A549 (cell line): ENCODE measurements at regions of chr7 and their contacts with region 1.

Region 1: DNA sequence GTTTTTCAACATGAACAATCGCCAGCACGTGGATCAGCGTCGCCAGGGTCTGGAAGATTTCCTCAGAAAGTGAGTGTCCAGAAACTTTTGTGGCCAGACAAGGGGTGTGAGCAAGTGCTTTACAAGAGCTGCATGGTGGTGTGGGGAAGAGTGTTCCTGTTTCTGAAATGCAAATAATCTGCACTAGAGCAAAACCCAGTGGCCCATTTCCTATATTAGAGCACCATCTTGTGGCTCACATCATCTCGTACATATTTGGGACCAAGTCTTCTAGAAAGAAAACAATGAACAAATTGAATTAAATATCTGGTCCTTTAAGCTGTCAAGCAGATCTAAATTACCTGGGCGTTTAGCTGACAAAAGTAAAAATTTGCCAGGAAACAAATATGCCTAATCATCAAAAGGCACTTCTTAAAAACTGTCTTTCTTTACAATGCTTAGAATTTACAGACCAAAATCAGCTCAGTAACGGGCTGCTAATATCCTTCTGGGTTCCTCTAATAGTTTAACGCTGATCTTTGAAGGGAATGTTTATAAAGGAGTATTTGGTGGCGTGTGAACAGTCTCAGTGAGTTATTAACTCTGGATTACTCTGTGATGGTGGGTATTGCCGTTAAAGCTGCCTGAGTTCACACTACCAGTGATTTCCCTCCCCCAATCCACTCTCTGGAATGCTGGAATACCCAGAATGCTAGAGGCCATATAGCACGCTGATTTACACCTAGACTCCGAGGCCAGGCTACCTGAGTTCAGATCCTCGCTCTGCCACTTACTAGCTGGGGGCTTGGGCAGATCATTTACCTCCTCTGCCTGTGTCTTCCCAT is 73.6 kb downstream of the SNX10 start:
- DNase-seq: peak; percentile 19 to 74
- ATAC-seq: peak; percentile 76 to 83
- H3K4me3 ChIP-seq: no peak overlapping the region
- H3K27ac ChIP-seq: no peak overlapping the region
- H3K4me1 ChIP-seq: peaks cover 7% of the 10 kb centered on the region; the same call in 1 of the 3 replicates
- CTCF ChIP-seq: peak; percentile 94
- EP300 ChIP-seq: no peak
- POLR2A ChIP-seq: no peak
- RAD21 ChIP-seq: peak; percentile 96 to 98

Region 2: GRCh38 chr7:25894902-25895791 is 470.1 kb before region 1 on chr7:
- CTCF ChIA-PET with region 1: interaction called, 154 read pairs
- POLR2A ChIA-PET with region 1: no interaction called
- DNase-seq: peak; percentile 42 to 75
- ATAC-seq: peak; percentile 88 to 94
- H3K4me3 ChIP-seq: peak overlapping the region; percentile 22
- H3K27ac ChIP-seq: peak overlapping the region in 1 of 2 experiments; percentile 4; a peak in 3 of 6 replicates
- H3K4me1 ChIP-seq: peaks cover 6% of the 10 kb centered on the region; the same call in 1 of the 3 replicates
- CTCF ChIP-seq: peak; percentile 61
- EP300 ChIP-seq: no peak
- POLR2A ChIP-seq: no peak
- RAD21 ChIP-seq: peak in 1 of 2 experiments; percentile 24; a peak in 2 of 5 replicates

Region 3: DNA sequence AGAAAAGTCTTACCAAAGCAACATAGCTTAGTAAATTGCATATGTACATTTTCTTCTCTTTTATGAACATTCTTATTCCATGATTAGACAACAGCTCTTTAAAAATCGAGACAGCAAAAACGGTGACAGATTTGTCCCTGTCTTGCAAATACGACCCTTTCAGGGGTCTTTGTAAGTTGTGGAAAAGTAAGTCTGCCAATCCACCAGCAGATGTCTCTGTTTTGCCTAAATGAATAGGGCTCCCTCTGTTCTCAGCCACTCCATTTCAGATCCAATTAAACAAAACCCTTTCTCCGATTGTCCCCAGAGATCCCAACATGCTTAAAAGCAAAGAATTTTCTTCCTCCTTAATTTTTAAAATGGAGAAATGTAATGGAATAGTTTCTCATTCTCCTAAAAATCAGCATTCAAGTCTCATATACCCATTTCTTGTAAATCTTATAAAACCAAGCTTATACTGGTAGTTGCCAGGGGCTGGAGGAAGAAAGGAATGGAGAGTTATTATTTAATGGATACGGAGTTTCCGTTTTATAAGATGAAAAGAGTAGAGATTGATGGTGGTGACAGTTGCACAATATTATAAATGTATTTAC is 274.3 kb before region 1 on chr7:
- CTCF ChIA-PET with region 1: interaction called, 94 read pairs
- POLR2A ChIA-PET with region 1: no interaction called
- DNase-seq: peak; percentile 45 to 64
- ATAC-seq: peak; percentile 68 to 87; a peak in 5 of 6 replicates
- H3K4me3 ChIP-seq: no peak overlapping the region
- H3K27ac ChIP-seq: no peak overlapping the region
- H3K4me1 ChIP-seq: no peaks in the 10 kb centered on the region
- CTCF ChIP-seq: peak; percentile 87
- EP300 ChIP-seq: no peak
- POLR2A ChIP-seq: no peak
- RAD21 ChIP-seq: peak; percentile 78 to 80

Region 4: GRCh38 chr7:26284995-26285632 is 80.2 kb before region 1 on chr7:
- CTCF ChIA-PET with region 1: interaction called, 41 read pairs
- POLR2A ChIA-PET with region 1: no interaction called
- DNase-seq: peak in 1 of 2 experiments; percentile 33
- ATAC-seq: peak in 1 of 2 experiments; percentile 71; a peak in 3 of 6 replicates
- H3K4me3 ChIP-seq: no peak overlapping the region
- H3K27ac ChIP-seq: no peak overlapping the region
- H3K4me1 ChIP-seq: no peaks in the 10 kb centered on the region
- CTCF ChIP-seq: no peak
- EP300 ChIP-seq: no peak
- POLR2A ChIP-seq: no peak
- RAD21 ChIP-seq: 0 out of 5 replicates have a peak, but pooled peaks of 1 of the 2 experiments have one; percentile 3

Region 5: GRCh38 chr7:26376175-26376917 is 11.1 kb after region 1 on chr7:
- CTCF ChIA-PET with region 1: interaction called, 10 read pairs
- POLR2A ChIA-PET with region 1: no interaction called
- DNase-seq: peak; percentile 25 to 52
- ATAC-seq: peak; percentile 90 to 91
- H3K4me3 ChIP-seq: peak overlapping the region; percentile 59
- H3K27ac ChIP-seq: peak overlapping the region; percentile 46 to 81
- H3K4me1 ChIP-seq: no peaks in the 10 kb centered on the region
- CTCF ChIP-seq: no peak
- EP300 ChIP-seq: no peak
- POLR2A ChIP-seq: no peak
- RAD21 ChIP-seq: no peak

Region 6: DNA sequence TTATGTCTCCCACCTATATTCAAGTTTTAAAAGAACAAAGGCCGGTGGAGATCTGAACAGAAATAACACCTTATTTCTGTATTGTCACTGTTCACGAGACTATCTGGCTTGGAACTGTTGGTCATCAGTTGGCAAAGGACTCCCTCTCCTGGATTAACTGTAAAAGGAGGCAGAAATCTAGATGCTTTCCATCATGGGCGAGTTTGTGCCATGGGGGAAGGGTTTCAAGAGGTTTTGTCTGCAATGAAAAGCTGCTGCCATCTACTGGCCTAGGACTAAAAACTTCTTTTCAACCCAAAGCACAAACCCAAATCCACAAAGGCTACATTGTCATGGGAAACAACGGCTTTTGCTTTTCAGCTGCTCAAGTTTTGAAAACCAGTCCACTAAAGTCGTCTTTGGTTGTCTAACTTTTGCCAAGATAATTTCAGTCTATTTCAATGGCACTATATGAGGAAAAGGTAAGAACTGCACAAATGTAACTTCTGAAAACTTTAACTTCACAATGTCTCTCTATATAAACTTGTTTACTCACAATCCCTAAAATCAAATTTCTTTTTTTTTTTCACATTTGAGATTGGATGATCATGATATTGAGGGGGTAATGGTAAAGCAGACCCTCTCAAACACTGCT is 302.3 kb after region 1 on chr7:
- CTCF ChIA-PET with region 1: interaction called, 228 read pairs
- POLR2A ChIA-PET with region 1: interaction called, 8 read pairs
- DNase-seq: peak; percentile 47 to 94
- ATAC-seq: peak; percentile 99 to 100
- H3K4me3 ChIP-seq: no peak overlapping the region
- H3K27ac ChIP-seq: no peak overlapping the region
- H3K4me1 ChIP-seq: 0 out of 3 replicates have a peak, but pooled peaks cover 4% of the 10 kb centered on the region
- CTCF ChIP-seq: peak; percentile 98
- EP300 ChIP-seq: no peak
- POLR2A ChIP-seq: no peak
- RAD21 ChIP-seq: peak; percentile 90 to 97